ENCODE measurements at regions of chr7 and their contacts with region 1.

Region 1: GRCh38 chr7:3065724-3066143 is 22.1 kb upstream of the CARD11 start:
- DNase-seq: peak in 1 of 2 donors; percentile 18
- ATAC-seq: no peak
- H3K4me3 ChIP-seq: no peak overlapping the region
- H3K27ac ChIP-seq: no peak overlapping the region
- H3K4me1 ChIP-seq: peaks cover 0 to 4% (median 0%) of the 10 kb centered on the region in 9 donors
- H3K27me3 ChIP-seq: peaks cover 0 to 26% (median 13%) of the 10 kb centered on the region in 7 donors
- CTCF ChIP-seq: peak in 7 of 9 donors; percentile 20 to 56 (median 36)

Region 2: GRCh38 chr7:2688409-2689331 is 377.1 kb before region 1 on chr7:
- intact Hi-C with region 1: no loop called
- DNase-seq: no peak
- ATAC-seq: peak in 2 of 8 donors; percentile 4 to 23
- H3K4me3 ChIP-seq: peak overlapping the region in 9 of 10 donors; percentile 12 to 45 (median 31)
- H3K27ac ChIP-seq: no peak overlapping the region
- H3K4me1 ChIP-seq: peaks cover 7 to 33% (median 17%) of the 10 kb centered on the region in 9 donors
- H3K27me3 ChIP-seq: peaks cover 0 to 60% (median 52%) of the 10 kb centered on the region in 7 donors
- CTCF ChIP-seq: no peak

Region 3: DNA sequence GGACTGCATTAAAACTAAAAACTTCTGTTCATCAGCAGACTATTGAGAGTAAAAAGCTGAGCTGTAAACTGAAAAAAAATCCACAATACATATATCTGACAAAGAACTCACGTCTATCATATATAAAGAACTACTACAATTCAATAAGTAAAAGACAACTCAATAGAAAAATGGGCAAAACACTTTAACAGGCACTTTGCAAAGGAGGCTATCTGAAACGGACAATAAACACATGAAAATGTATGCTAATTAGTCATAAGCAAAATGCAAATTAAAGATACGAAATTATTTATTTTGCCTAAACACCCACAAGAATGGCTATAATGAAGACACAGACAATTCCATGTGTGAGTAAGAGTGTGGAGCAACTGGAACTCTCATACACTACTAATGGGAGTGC is 40.1 kb before region 1 on chr7:
- intact Hi-C with region 1: loop called in 1 of 10 experiments (anchors 2 kb)
- DNase-seq: no peak
- ATAC-seq: no peak
- H3K4me3 ChIP-seq: no peak overlapping the region
- H3K27ac ChIP-seq: no peak overlapping the region
- H3K4me1 ChIP-seq: peaks cover 0 to 5% (median 0%) of the 10 kb centered on the region in 9 donors
- H3K27me3 ChIP-seq: peaks cover 0 to 23% (median 13%) of the 10 kb centered on the region in 7 donors
- CTCF ChIP-seq: no peak

Region 4: GRCh38 chr7:3200504-3200903 is 134.8 kb after region 1 on chr7:
- intact Hi-C with region 1: no loop called
- DNase-seq: no peak
- ATAC-seq: peak in 1 of 8 donors; percentile 47
- H3K4me3 ChIP-seq: no peak overlapping the region
- H3K27ac ChIP-seq: no peak overlapping the region
- H3K4me1 ChIP-seq: no peaks in the 10 kb centered on the region
- H3K27me3 ChIP-seq: no peaks in the 10 kb centered on the region
- CTCF ChIP-seq: peak in 7 of 9 donors; percentile 34 to 48 (median 40)

Measured in heart right ventricle (tissue), 16 donors.